ENCODE measurements at regions of chr14 and their contacts with region 1.

Region 1: DNA sequence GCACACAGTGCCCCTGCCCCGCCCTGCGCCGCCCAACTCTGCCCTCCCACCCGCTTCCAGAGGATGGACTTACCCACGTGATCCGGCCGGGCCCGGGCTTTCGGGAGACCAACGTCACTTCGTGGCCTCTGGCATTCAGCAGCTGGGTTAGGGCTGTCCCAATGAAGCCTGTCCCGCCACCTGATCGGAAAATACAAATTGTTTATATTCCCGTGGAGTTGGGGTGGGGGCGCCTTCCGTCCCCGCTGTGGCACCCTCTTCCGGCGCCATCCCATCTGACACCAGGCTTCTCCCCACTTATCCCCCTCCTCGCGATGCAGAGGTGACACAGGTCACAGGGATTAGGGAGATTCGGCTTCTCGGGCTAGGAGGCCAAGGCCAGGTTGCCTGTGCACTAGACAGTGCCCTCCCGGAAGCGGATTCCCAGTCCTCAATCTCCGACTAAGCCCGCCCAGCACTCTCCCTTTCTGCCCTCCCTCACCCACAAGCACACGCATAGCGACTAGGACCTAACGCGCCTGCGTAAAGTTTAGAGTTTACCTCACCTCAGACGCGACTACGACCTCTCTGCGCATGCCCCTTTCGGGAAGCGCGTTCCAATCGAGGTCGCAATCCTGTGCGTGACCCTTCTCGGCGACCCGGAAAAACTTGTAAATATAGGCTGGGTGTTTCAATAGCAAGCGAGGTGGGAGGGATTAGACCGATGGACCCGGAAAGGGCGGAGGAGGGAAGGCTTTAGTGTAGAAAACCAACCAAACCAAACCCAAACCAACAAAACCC is at the start of gene SDR39U1:
- DNase-seq: peak; percentile 96 to 99 (median 98)
- H3K4me3 ChIP-seq: peak within 1 kb of the TSS in 3 of 4 donors; percentile 14 to 72 (median 49)
- H3K27ac ChIP-seq: peak within 1 kb of the TSS; percentile 96 to 100 (median 99)
- H3K4me1 ChIP-seq: peaks cover 14 to 48% of the 10 kb centered on the region in 2 donors
- H3K27me3 ChIP-seq: no peaks in the 10 kb centered on the region
- CTCF ChIP-seq: peak in 1 of 6 experiments; percentile 2
- POLR2A ChIP-seq: peak; percentile 91 to 97
- total RNA-seq, gene SDR39U1: 35.0 to 100 (median 74.4) TPM

Region 2: GRCh38 chr14:24241829-24242443 is 200.5 kb before region 1 on chr14:
- intact Hi-C with region 1: loop called in 1 of 2 experiments (anchors 5 kb)
- DNase-seq: peak; percentile 93 to 97 (median 95)
- H3K4me3 ChIP-seq: peak overlapping the region in 3 of 4 donors; percentile 56 to 93 (median 78)
- H3K27ac ChIP-seq: peak overlapping the region; percentile 94 to 99 (median 97)
- H3K4me1 ChIP-seq: peaks cover 26 to 32% of the 10 kb centered on the region in 2 donors
- H3K27me3 ChIP-seq: no peaks in the 10 kb centered on the region
- CTCF ChIP-seq: peak; percentile 57 to 91 (median 75)
- POLR2A ChIP-seq: peak in 1 of 2 donors; percentile 29

Measured in adrenal gland (tissue), 19 donors.